Heart right ventricle (tissue), 16 donors: ENCODE measurements at regions of chr14 and their contacts with region 1.

Region 1: GRCh38 chr14:55160989-55161388 is 30.4 kb downstream of the DLGAP5 start:
- DNase-seq: no peak
- ATAC-seq: peak in 6 of 8 donors; percentile 47 to 72 (median 60)
- H3K4me3 ChIP-seq: no peak overlapping the region
- H3K27ac ChIP-seq: no peak overlapping the region
- H3K4me1 ChIP-seq: no peaks in the 10 kb centered on the region
- H3K27me3 ChIP-seq: no peaks in the 10 kb centered on the region
- CTCF ChIP-seq: peak; percentile 28 to 81 (median 63)

Region 2: GRCh38 chr14:54902521-54903420 is 258.2 kb before region 1 on chr14 and contains the start of gene GCH1:
- intact Hi-C with region 1: loop called in 1 of 10 experiments (anchors 10 kb)
- DNase-seq: peak; percentile 65 to 69
- ATAC-seq: peak; percentile 93 to 96 (median 94)
- H3K4me3 ChIP-seq: peak within 1 kb of the TSS; percentile 74 to 96 (median 88)
- H3K27ac ChIP-seq: peak within 1 kb of the TSS; percentile 40 to 93 (median 85)
- H3K4me1 ChIP-seq: peaks cover 0 to 27% (median 10%) of the 10 kb centered on the region in 9 donors
- H3K27me3 ChIP-seq: no peaks in the 10 kb centered on the region
- CTCF ChIP-seq: peak in 8 of 9 donors; percentile 44 to 79 (median 49)
- total RNA-seq, gene GCH1: 1.0 to 11.0 (median 2.7) TPM

Region 3: GRCh38 chr14:54955143-54955542 is 205.8 kb before region 1 on chr14:
- intact Hi-C with region 1: no loop called
- DNase-seq: no peak
- ATAC-seq: no peak
- H3K4me3 ChIP-seq: no peak overlapping the region
- H3K27ac ChIP-seq: no peak overlapping the region
- H3K4me1 ChIP-seq: no peaks in the 10 kb centered on the region
- H3K27me3 ChIP-seq: no peaks in the 10 kb centered on the region
- CTCF ChIP-seq: no peak

Region 4: DNA sequence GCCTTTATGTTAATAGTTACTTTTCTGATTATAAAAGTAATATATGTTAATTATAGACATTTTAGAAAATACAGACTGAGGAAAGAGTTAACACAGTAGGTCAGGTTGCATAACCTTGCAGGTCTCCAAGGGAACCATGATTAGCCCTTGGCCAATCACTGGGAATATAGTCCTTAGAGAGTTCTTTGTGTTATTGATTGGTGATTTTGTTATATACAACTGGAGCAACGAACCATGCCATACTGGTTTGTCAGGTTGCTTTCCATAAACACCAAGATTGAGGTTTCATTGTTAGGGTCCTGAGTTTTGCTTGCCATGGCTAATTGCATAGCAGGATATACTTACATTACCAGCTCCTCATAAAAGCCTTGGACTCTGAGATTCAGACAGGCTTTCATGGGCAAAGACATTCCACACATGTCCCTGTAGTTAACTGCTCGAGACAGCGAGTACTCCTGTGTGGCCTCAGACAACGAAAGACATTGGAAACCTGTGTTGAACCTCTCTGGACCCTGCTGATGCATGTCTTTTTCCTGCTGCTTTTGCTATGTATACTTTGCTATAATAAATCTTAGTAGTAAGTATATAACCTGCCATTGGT is 75.8 kb before region 1 on chr14:
- intact Hi-C with region 1: loop called in 9 of 10 experiments (anchors 1 to 5 kb)
- DNase-seq: no peak
- ATAC-seq: no peak
- H3K4me3 ChIP-seq: no peak overlapping the region
- H3K27ac ChIP-seq: no peak overlapping the region
- H3K4me1 ChIP-seq: peaks cover 0 to 13% (median 3%) of the 10 kb centered on the region in 9 donors
- H3K27me3 ChIP-seq: no peaks in the 10 kb centered on the region
- CTCF ChIP-seq: no peak

Region 5: DNA sequence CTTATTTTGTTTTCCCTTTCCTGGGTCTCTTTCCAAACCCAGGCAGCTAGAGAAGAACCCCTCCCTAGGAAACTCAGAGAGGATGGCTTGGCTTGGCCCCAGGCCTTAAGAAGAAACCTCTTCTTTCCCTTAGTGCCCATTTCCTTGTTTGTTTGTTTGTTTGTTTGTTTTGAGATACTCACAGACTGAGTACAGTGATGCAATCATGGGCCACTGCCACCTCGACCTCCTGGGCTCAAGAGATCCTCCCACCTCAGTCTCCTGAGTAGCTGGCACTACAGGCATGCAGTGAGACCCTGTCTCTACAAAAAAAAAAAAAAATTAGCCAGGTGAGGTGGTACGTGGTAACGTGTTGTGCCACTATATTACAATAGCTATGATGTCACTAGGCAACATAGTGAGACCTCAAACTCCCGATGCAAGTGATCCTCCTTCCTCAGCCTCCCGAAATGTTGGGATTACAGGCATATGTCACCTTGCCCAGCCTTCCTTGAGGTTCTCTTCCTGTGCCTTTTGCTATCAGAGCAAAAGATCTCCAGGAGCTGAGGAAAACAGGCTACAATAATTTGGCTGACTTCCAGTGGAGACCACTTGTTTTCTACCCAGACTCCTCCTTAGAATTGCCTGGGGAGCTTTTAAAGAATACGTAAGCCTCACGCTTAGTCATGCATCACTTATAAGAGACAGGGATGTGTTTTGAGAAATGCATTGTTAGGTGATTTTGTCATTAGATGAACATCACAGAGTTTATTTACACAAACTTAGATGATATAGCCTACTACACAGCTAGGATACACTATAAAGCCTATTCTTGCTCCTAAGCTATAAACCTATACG is 66.5 kb before region 1 on chr14:
- intact Hi-C with region 1: loop called (anchors 1 to 5 kb)
- DNase-seq: no peak
- ATAC-seq: no peak
- H3K4me3 ChIP-seq: no peak overlapping the region
- H3K27ac ChIP-seq: no peak overlapping the region
- H3K4me1 ChIP-seq: peaks cover 0 to 43% (median 23%) of the 10 kb centered on the region in 9 donors
- H3K27me3 ChIP-seq: no peaks in the 10 kb centered on the region
- CTCF ChIP-seq: no peak